Vagina (tissue), 2 donors: ENCODE measurements at regions of chr12 and their contacts with region 1.

Region 1: GRCh38 chr12:15256766-15257165 is 35.5 kb upstream of the RERG start:
- DNase-seq: no peak
- H3K4me3 ChIP-seq: no peak overlapping the region
- H3K27ac ChIP-seq: peak overlapping the region; percentile 1
- H3K4me1 ChIP-seq: no peaks in the 10 kb centered on the region
- H3K27me3 ChIP-seq: no peaks in the 10 kb centered on the region
- CTCF ChIP-seq: no peak
- POLR2A ChIP-seq: no peak

Region 2: DNA sequence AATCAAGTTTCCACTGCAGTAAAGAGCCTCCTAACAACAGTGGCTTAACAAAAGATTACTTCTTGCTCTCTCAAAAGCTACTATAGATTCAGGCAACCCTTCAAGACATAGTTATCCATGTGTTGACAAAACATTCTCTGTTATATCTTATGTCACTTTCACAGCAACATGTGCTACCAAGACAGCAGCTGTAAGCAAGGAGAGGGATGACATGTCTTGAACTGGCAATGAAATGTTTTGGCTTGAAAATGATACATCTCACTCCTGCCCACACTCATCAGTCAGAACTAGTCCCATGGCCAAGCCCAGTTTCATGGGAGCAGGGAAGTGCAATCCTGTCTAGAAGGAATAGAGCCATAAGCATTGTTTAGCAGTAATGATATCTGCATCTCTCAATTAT is 1264.7 kb before region 1 on chr12:
- intact Hi-C with region 1: no loop called
- DNase-seq: no peak
- H3K4me3 ChIP-seq: no peak overlapping the region
- H3K27ac ChIP-seq: no peak overlapping the region
- H3K4me1 ChIP-seq: no peaks in the 10 kb centered on the region
- H3K27me3 ChIP-seq: no peaks in the 10 kb centered on the region
- CTCF ChIP-seq: no peak
- POLR2A ChIP-seq: no peak

Region 3: GRCh38 chr12:14828896-14829295 is 427.9 kb before region 1 on chr12:
- intact Hi-C with region 1: no loop called
- DNase-seq: no peak
- H3K4me3 ChIP-seq: no peak overlapping the region
- H3K27ac ChIP-seq: no peak overlapping the region
- H3K4me1 ChIP-seq: peaks cover 5% of the 10 kb centered on the region
- H3K27me3 ChIP-seq: no peaks in the 10 kb centered on the region
- CTCF ChIP-seq: no peak
- POLR2A ChIP-seq: no peak

Region 4: GRCh38 chr12:15001733-15002382 is 254.9 kb before region 1 on chr12:
- intact Hi-C with region 1: loop called (anchors 10 kb)
- DNase-seq: no peak
- H3K4me3 ChIP-seq: no peak overlapping the region
- H3K27ac ChIP-seq: peak overlapping the region; percentile 18
- H3K4me1 ChIP-seq: peaks cover 15% of the 10 kb centered on the region
- H3K27me3 ChIP-seq: no peaks in the 10 kb centered on the region
- CTCF ChIP-seq: no peak
- POLR2A ChIP-seq: no peak

Region 5: DNA sequence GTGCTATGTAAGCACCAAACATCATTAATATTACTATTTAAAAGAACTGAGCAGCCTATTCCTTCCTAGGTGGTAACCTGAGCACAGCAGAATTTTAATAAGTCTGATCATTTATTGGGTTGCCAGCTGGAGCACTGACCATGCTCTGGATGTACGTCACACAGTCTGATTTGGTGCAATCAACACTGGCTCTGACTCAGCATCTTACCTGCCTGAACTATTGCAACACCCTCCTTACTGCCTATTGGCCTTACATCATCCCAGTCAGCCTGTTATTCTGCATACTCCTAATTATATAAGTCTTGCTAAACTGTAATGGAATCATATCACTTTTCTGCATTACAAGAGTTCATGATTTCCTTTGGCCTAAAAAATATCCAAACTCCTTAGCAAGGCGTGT is 215.3 kb after region 1 on chr12:
- intact Hi-C with region 1: no loop called
- DNase-seq: no peak
- H3K4me3 ChIP-seq: no peak overlapping the region
- H3K27ac ChIP-seq: no peak overlapping the region
- H3K4me1 ChIP-seq: no peaks in the 10 kb centered on the region
- H3K27me3 ChIP-seq: no peaks in the 10 kb centered on the region
- CTCF ChIP-seq: no peak
- POLR2A ChIP-seq: no peak